CD8-positive, alpha-beta T cell (primary cell): ENCODE measurements at regions of chr20 and their contacts with region 1.

Region 1: DNA sequence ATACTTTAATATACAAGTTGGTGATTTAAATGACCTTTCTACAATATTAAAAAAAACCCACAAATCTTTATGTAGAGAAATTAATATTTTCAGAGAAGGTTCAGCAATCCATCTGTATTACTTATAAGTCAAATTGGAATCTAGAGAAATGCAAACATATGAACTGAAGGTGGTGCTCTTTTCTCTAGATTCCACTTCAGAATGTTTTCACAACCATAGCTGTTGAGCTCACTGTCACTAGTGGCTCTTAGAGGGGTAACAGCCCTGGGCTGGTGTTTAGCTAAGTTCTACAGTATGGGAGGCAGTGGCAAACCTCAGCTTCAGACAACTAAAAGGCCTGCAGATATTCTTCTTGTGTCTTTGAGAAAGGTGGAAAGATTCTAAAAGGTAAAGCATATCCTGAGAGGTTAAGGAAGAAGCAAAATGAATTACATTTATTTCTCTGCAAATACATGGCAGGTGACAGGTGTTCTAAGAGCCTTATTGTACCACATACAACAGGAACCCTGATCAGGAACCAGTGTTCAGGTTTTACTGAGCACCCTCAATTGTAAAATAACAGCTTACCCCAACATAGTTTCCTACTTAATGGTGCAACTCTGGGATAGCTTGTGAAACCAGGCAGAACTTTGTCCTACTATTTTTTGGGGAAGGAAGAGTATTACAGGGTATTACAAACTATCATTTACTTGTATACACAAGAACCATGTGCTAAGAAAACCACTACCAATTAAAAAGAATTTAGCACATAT is 56.6 kb upstream of the SAMHD1 start:
- DNase-seq: peak in 6 of 9 experiments; percentile 20 to 82 (median 55)
- ATAC-seq: peak; percentile 99
- H3K4me3 ChIP-seq: no peak overlapping the region
- H3K4me3 Mint-ChIP-seq: peak overlapping the region; percentile 13
- H3K27ac ChIP-seq: peak overlapping the region in 1 of 2 experiments; percentile 58
- H3K27ac Mint-ChIP-seq: peak overlapping the region; percentile 84
- H3K4me1 ChIP-seq: peaks cover 12% of the 10 kb centered on the region
- H3K4me1 Mint-ChIP-seq: peaks cover 18% of the 10 kb centered on the region
- H3K27me3 ChIP-seq: no peaks in the 10 kb centered on the region
- H3K27me3 Mint-ChIP-seq: no peaks in the 10 kb centered on the region
- CTCF ChIP-seq: peak; percentile 71

Region 2: GRCh38 chr20:36932476-36933426 is 75.3 kb before region 1 on chr20:
- CTCF ChIA-PET with region 1: interaction called, 11 read pairs
- POLR2A ChIA-PET with region 1: interaction called, 5 read pairs
- intact Hi-C with region 1: no loop called
- DNase-seq: peak in 1 of 9 experiments; percentile 35
- ATAC-seq: no peak
- H3K4me3 ChIP-seq: no peak overlapping the region
- H3K4me3 Mint-ChIP-seq: no peak overlapping the region
- H3K27ac ChIP-seq: peak overlapping the region; percentile 10 to 29
- H3K27ac Mint-ChIP-seq: peak overlapping the region; percentile 69
- H3K4me1 ChIP-seq: peaks cover 65% of the 10 kb centered on the region
- H3K4me1 Mint-ChIP-seq: peaks cover 54% of the 10 kb centered on the region
- H3K27me3 ChIP-seq: no peaks in the 10 kb centered on the region
- H3K27me3 Mint-ChIP-seq: no peaks in the 10 kb centered on the region
- CTCF ChIP-seq: no peak

Region 3: GRCh38 chr20:36975099-36975818 is 32.8 kb before region 1 on chr20:
- CTCF ChIA-PET with region 1: interaction called, 3 read pairs
- POLR2A ChIA-PET with region 1: no interaction called
- intact Hi-C with region 1: loop called in 1 of 2 experiments (anchors 2 kb)
- DNase-seq: peak; percentile 21 to 86 (median 68)
- ATAC-seq: peak; percentile 86
- H3K4me3 ChIP-seq: peak overlapping the region in 1 of 2 experiments; percentile 1
- H3K4me3 Mint-ChIP-seq: peak overlapping the region; percentile 35
- H3K27ac ChIP-seq: peak overlapping the region; percentile 66 to 83
- H3K27ac Mint-ChIP-seq: peak overlapping the region; percentile 66
- H3K4me1 ChIP-seq: peaks cover 46% of the 10 kb centered on the region
- H3K4me1 Mint-ChIP-seq: peaks cover 40% of the 10 kb centered on the region
- H3K27me3 ChIP-seq: no peaks in the 10 kb centered on the region
- H3K27me3 Mint-ChIP-seq: no peaks in the 10 kb centered on the region
- CTCF ChIP-seq: no peak

Region 4: DNA sequence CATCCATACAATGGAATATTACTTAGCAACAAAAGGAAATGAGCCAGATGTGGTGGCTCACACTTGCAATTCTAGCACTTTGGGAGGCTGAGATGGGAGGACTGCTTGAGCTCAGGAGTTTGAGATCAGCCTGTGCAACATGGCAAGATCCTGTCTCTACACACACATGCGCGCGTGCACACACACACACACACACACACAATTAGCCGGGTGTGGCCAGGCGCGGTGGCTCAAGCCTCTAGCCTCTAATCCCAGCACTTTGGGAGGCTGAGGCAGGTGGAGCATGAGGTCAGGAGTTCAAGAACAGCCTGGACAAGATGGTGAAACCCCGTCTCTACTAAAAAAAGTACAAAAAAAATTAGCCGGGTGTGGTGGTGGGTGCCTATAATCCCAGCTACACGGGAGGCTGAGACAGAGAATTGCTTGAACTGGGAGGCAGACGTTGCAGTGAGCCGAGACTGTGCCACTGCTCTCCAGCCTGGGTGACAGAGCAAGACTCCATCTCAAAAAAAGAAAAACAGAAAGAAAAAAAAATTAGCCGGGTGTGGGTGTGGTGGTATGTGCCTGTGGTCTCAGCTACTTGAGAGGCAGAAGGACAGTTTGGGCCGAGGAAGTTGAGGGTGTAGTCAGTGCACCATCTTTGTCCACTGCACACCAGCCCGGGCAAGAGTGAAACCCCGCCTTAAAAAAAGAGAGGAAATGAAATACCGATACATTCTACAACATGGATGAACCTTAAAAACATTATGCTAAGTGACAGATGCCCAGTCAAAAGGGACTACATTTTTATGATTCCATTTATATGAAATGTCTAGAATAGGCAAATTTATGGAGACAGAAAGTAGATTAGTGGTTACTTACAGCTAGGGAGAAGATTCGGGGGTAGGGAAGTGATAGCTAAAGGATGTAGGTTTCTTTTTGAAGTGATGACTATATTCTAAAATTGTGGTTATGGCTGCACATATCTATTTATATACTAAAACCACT is 35.2 kb after region 1 on chr20:
- CTCF ChIA-PET with region 1: interaction called, 5 read pairs
- POLR2A ChIA-PET with region 1: interaction called, 5 read pairs
- intact Hi-C with region 1: loop called (anchors 5 kb)
- DNase-seq: peak in 8 of 9 experiments; percentile 4 to 70 (median 34)
- ATAC-seq: peak; percentile 79
- H3K4me3 ChIP-seq: peak overlapping the region; percentile 24 to 36
- H3K4me3 Mint-ChIP-seq: peak overlapping the region; percentile 84
- H3K27ac ChIP-seq: peak overlapping the region; percentile 49 to 65
- H3K27ac Mint-ChIP-seq: peak overlapping the region; percentile 89
- H3K4me1 ChIP-seq: peaks cover 15% of the 10 kb centered on the region
- H3K4me1 Mint-ChIP-seq: peaks cover 26% of the 10 kb centered on the region
- H3K27me3 ChIP-seq: no peaks in the 10 kb centered on the region
- H3K27me3 Mint-ChIP-seq: no peaks in the 10 kb centered on the region
- CTCF ChIP-seq: no peak

Region 5: DNA sequence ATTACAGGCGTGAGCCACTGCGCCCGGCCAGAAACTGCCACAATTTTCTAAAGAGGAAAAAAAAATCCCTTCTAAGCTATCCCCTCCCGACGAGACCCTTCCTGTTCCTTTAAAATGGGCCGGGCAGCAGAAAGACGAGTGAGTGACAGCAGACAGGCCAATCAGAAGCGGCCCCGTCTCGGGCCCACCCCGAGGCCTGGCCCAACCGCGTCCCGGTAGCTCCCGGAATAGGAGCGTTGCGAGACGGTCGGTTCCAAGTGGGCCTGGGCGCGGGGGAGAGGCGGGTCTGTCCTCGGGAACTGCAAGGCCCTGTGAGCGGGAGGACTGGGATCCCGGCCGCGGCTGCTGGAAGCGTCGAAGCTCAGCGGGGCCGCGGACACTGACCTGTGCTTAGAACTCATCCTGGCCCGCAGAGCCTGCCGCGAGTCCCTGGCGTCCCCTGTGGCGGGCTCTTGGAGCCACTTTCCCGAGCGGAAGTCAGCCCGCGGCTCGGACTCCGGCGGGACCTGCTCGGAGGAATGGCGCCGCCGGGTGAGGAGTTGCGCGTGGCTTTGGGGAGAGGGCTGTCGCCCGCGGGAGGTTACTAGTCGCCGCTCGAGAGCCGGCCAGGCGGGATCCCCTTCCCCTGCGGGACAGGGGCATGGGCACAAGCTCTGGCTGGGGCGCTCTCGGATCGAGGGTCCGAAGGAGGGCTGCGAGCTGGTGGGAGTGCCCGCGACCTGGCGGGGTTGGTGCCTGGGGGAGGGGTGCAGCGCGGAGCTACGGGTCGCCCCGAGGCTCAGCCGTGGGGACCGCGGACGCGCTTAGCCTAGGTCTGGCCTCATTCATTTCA is 171.0 kb after region 1 on chr20 and contains the starts of genes MROH8 and RPN2:
- CTCF ChIA-PET with region 1: no interaction called
- POLR2A ChIA-PET with region 1: interaction called, 7 read pairs
- intact Hi-C with region 1: loop called (anchors 2 to 10 kb)
- DNase-seq: peak; percentile 88 to 97 (median 94)
- ATAC-seq: peak; percentile 92
- H3K4me3 ChIP-seq: peak within 1 kb of the TSS; percentile 95 to 98
- H3K4me3 Mint-ChIP-seq: peak within 1 kb of the TSS; percentile 98
- H3K27ac ChIP-seq: peak within 1 kb of the TSS; percentile 94 to 96
- H3K27ac Mint-ChIP-seq: peak within 1 kb of the TSS; percentile 98
- H3K4me1 ChIP-seq: peaks cover 26% of the 10 kb centered on the region
- H3K4me1 Mint-ChIP-seq: peaks cover 44% of the 10 kb centered on the region
- H3K27me3 ChIP-seq: no peaks in the 10 kb centered on the region
- H3K27me3 Mint-ChIP-seq: no peaks in the 10 kb centered on the region
- CTCF ChIP-seq: no peak
- total RNA-seq, gene MROH8: 0.60 to 1.1 TPM
- total RNA-seq, gene RPN2: 60.8 to 68.8 TPM

Region 6: GRCh38 chr20:37384683-37385174 is 376.7 kb after region 1 on chr20:
- CTCF ChIA-PET with region 1: no interaction called
- POLR2A ChIA-PET with region 1: no interaction called
- intact Hi-C with region 1: no loop called
- DNase-seq: peak; percentile 65 to 91 (median 74)
- ATAC-seq: peak; percentile 95
- H3K4me3 ChIP-seq: peak overlapping the region; percentile 41 to 46
- H3K4me3 Mint-ChIP-seq: peak overlapping the region; percentile 85
- H3K27ac ChIP-seq: no peak overlapping the region
- H3K27ac Mint-ChIP-seq: no peak overlapping the region
- H3K4me1 ChIP-seq: peaks cover 5% of the 10 kb centered on the region
- H3K4me1 Mint-ChIP-seq: peaks cover 8% of the 10 kb centered on the region
- H3K27me3 ChIP-seq: no peaks in the 10 kb centered on the region
- H3K27me3 Mint-ChIP-seq: peaks cover 3% of the 10 kb centered on the region
- CTCF ChIP-seq: peak; percentile 79

Region 7: DNA sequence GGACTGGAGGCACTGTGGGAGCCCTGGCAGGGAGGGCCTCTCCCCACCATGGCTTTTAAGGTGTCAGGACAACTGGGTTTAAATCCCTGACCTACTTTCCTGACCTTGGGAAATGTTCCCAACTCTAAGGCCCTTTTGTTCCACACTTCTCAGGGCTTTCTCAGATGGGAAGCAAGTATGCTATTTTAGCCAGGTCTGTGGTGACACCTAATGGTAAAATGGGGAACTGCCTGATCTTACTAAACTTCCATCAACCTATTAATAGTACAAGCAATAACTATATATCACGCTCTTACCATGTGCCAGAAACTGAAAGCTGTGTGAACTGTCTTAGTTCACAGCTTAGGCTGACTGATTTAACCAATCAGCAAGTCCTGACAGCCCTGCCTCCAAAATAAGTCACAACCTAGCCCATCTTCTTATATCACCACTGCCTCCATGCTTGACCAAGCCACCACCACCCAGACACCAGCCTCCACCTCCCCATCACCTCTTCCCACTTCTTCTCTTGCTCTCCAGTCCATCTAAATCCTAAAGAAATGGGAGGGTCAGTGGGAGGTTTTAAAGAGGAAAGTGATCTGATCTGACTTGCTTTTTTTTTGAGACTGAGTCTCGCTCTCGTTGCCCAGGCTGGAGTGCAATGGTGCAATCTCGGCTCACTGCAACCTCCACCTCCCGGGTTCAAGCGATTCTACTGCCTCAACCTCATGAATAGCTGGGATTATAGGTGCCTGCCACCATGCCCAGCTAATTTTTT is 526.5 kb after region 1 on chr20:
- CTCF ChIA-PET with region 1: interaction called, 3 read pairs
- POLR2A ChIA-PET with region 1: no interaction called
- intact Hi-C with region 1: loop called in 1 of 2 experiments (anchors 10 kb)
- DNase-seq: peak in 6 of 9 experiments; percentile 25 to 83 (median 57)
- ATAC-seq: peak; percentile 96
- H3K4me3 ChIP-seq: no peak overlapping the region
- H3K4me3 Mint-ChIP-seq: no peak overlapping the region
- H3K27ac ChIP-seq: no peak overlapping the region
- H3K27ac Mint-ChIP-seq: no peak overlapping the region
- H3K4me1 ChIP-seq: no peaks in the 10 kb centered on the region
- H3K4me1 Mint-ChIP-seq: no peaks in the 10 kb centered on the region
- H3K27me3 ChIP-seq: no peaks in the 10 kb centered on the region
- H3K27me3 Mint-ChIP-seq: peaks cover 10% of the 10 kb centered on the region
- CTCF ChIP-seq: peak; percentile 95